OCI-LY7 (cell line): ENCODE measurements at regions of chr10 and their contacts with region 1.

Region 1: GRCh38 chr10:58070956-58071355 is 196.7 kb downstream of the IPMK start:
- DNase-seq: no peak
- H3K4me3 ChIP-seq: no peak overlapping the region
- H3K27ac ChIP-seq: no peak overlapping the region
- H3K4me1 ChIP-seq: no peaks in the 10 kb centered on the region
- CTCF ChIP-seq: no peak

Region 2: GRCh38 chr10:58094985-58095718 is 24.2 kb after region 1 on chr10:
- CTCF ChIA-PET with region 1: no interaction called
- POLR2A ChIA-PET with region 1: no interaction called
- intact Hi-C with region 1: loop called (anchors 1 kb)
- DNase-seq: no peak
- H3K4me3 ChIP-seq: no peak overlapping the region
- H3K27ac ChIP-seq: no peak overlapping the region
- H3K4me1 ChIP-seq: no peaks in the 10 kb centered on the region
- CTCF ChIP-seq: no peak

Region 3: GRCh38 chr10:58457761-58458616 is 387.0 kb after region 1 on chr10:
- CTCF ChIA-PET with region 1: no interaction called
- POLR2A ChIA-PET with region 1: no interaction called
- intact Hi-C with region 1: no loop called
- DNase-seq: no peak
- H3K4me3 ChIP-seq: no peak overlapping the region
- H3K27ac ChIP-seq: no peak overlapping the region
- H3K4me1 ChIP-seq: no peaks in the 10 kb centered on the region
- CTCF ChIP-seq: no peak